Ovary (tissue), 10 donors: ENCODE measurements at regions of chr19 and their contacts with region 1.

Region 1: GRCh38 chr19:54738715-54739114 is 402 bp downstream of the KIR2DL3 start:
- DNase-seq: no peak
- H3K4me3 ChIP-seq: no peak overlapping the region
- H3K27ac ChIP-seq: no peak overlapping the region
- H3K4me1 ChIP-seq: no peaks in the 10 kb centered on the region
- H3K27me3 ChIP-seq: no peaks in the 10 kb centered on the region
- CTCF ChIP-seq: no peak
- EP300 ChIP-seq: no peak
- POLR2A ChIP-seq: no peak

Region 2: DNA sequence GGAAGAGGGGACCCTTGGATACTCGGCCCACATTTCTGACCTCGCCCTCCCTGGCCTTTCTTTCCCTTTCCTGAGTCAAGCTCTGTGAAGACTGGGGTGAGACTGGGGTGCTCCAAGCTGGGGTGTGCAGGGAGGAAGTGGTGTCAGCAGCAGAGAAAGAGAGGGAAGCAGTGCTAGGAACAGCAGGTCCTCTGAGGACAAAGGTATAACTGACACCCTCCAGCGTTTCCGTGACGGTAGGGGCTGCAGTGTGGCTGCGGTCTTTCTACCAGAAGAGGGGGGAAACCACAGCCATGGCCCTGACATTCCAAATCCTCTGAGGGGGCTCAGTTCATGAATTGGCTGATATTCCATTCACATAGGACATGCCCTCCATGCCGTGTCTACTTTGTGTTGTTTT is 112.6 kb after region 1 on chr19:
- intact Hi-C with region 1: loop called in 1 of 4 experiments (anchors 5 kb)
- DNase-seq: no peak
- H3K4me3 ChIP-seq: no peak overlapping the region
- H3K27ac ChIP-seq: no peak overlapping the region
- H3K4me1 ChIP-seq: no peaks in the 10 kb centered on the region
- H3K27me3 ChIP-seq: no peaks in the 10 kb centered on the region
- CTCF ChIP-seq: no peak
- EP300 ChIP-seq: no peak
- POLR2A ChIP-seq: no peak

Region 3: GRCh38 chr19:55005684-55006488 is 267.2 kb after region 1 on chr19:
- intact Hi-C with region 1: no loop called
- DNase-seq: no peak
- H3K4me3 ChIP-seq: no peak overlapping the region
- H3K27ac ChIP-seq: no peak overlapping the region
- H3K4me1 ChIP-seq: peaks cover 2% of the 10 kb centered on the region
- H3K27me3 ChIP-seq: no peaks in the 10 kb centered on the region
- CTCF ChIP-seq: no peak
- EP300 ChIP-seq: no peak
- POLR2A ChIP-seq: no peak